ENCODE measurements at regions of chr6 and their contacts with region 1.

Region 1: DNA sequence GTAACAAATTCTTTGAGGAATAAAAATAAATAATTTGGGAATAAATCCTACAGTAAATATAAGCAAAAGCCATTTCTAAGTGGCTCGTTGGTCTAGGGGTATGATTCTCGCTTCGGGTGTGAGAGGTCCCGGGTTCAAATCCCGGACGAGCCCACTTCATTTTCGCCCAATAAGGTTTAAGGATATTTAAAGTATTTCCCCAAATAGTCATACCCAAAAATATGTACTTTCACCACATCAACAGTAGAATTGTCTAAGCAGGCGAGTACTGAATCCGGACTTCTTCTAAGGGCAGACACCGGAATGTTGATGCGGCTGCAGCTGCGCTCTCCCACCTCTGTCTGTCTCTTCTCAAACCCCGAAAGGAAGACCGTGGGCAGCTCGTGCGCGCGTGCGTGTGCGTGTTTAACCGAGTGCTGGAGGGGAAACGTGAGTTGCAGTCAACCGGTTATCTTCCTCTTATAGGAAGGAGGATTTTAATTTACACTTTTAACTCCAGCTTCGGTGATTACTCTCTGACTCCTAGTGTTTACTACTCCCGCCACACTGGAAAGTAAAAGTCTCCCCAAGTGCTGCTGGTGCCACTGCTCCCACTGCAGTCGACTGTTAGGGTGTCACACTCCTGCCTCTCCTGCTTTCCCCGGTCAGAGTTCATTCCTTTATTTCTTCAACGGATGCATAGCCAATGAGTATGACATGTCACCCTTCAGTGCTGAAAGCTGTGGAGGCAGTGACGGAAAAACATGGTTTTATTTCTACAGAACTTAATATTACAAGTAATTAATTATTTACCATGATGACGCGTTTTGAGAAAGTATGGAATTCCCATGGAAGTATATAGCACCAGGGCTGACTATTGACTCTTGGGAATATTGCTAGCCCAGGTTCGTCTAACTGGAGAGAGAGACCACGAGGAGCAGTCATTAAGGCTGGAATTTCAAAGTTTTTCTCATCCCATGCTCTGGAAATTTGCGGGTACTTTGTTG is 155.5 kb upstream of the PRSS16 start:
- DNase-seq: peak; percentile 93
- H3K4me3 ChIP-seq: peak overlapping the region; percentile 56
- H3K27ac ChIP-seq: no peak overlapping the region
- H3K4me1 ChIP-seq: no peaks in the 10 kb centered on the region
- H3K27me3 ChIP-seq: no peaks in the 10 kb centered on the region
- CTCF ChIP-seq: no peak

Region 2: DNA sequence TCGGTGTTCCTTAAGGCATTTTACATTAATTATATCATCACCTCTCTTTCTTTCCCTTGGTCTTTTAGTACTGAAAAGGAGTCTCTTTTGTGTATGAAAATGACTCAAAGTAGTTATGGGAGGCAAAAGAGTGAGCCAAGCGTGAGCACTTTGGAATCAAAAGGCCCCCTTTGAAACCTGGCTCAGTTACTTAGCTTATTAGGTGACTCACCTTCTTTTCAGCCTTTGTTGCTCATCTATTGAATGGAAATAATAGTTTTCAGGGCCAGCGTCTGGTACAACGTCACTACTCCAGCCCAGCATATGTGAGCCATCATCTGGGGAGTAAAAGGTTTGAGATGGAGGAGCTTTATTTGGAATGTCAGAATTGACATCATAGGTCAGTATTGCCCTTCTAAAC is 1587.3 kb before region 1 on chr6:
- CTCF ChIA-PET with region 1: no interaction called
- POLR2A ChIA-PET with region 1: interaction called, 12 read pairs
- intact Hi-C with region 1: no loop called
- DNase-seq: no peak
- H3K4me3 ChIP-seq: no peak overlapping the region
- H3K27ac ChIP-seq: no peak overlapping the region
- H3K4me1 ChIP-seq: peaks cover 19% of the 10 kb centered on the region
- H3K27me3 ChIP-seq: no peaks in the 10 kb centered on the region
- CTCF ChIP-seq: no peak

Region 3: DNA sequence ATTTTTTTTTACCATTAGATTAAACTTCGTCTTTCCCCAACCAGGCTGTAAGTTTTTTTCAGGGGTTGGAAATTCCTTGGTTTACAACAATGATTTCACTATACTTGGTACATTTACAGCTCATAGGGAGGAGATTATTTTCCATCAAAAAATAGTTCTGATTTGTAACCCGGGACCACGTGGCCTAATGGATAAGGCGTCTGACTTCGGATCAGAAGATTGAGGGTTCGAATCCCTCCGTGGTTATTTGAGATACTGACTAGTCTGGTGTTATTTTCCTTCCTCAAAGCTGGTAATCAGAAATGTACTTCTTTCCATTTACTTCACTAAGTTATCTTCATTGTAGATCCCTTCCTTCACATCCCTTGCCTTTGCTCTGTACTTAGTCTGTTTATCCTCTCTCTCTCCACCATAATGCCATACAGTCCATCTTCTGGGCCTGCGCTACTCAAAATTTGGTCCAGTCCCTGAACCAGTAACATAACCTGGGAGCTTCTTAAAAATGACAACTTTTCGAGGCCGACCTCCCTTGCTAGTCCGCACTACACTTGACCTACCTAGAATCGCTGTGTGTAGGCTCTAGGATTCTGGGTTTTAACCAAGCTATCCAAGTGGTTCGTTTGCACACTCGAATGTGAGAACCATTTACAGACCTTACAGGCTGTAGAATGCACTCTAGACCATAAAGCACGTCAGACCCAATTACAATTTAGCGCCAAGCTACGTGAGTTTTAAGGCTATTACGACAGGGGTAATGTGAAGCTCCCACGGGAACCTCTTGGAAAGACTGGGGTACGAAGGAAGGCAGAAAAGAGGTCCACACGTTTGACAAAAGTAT is 769.1 kb before region 1 on chr6:
- CTCF ChIA-PET with region 1: no interaction called
- POLR2A ChIA-PET with region 1: no interaction called
- intact Hi-C with region 1: loop called (anchors 10 kb)
- DNase-seq: peak; percentile 96
- H3K4me3 ChIP-seq: peak overlapping the region; percentile 65
- H3K27ac ChIP-seq: peak overlapping the region; percentile 59
- H3K4me1 ChIP-seq: no peaks in the 10 kb centered on the region
- H3K27me3 ChIP-seq: no peaks in the 10 kb centered on the region
- CTCF ChIP-seq: no peak

Measured in A673 (cell line).